CD4-positive, alpha-beta memory T cell (primary cell): ENCODE measurements at regions of chr7 and their contacts with region 1.

Region 1: DNA sequence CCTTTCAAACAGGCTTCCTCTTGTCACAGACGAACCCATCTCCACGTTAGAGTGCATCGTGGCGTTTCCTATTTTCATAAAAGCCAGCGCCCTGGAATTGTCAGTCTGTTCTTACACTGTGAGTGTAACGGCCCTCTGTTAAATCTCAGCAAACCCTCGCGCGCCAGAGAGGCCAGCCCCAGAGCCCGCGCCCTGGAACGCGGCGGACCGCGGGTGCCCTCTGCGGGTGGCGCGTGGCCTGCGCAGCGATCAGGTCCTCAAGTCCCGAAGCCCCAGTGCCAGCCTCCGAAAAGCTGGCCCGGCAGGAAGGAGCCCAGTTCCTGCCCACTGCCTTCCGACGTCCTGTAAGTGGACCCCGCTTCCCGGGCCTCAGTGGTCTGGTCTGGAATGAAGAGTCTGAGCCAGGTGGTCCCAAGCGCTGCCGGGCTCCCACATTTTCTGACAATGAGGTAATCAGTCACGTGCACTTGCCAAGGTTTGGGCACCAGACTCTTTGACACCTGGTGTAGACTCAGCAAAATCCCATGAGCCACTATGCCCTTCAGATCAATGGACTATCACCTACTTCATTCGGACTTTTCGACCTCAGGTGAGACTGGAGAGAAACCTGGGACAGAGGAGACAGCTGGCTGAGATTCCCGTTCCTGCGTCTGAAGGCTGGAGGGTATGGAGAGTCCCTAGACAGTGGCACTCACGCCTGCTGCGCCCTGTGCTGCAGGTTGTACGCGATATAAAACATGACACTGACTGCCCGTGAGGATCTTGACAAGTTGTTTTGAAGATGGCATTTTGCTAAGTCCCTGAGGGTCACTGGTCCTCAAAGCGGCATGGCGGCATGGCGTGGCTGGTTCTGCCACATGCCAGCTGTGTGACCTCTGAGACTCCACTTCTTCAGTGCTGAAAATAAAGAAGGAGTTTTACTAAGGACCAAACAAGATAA is 109.4 kb upstream of the LANCL2 start:
- DNase-seq: peak; percentile 54 to 67 (median 65)
- H3K4me3 ChIP-seq: peak overlapping the region; percentile 66 to 73
- H3K4me3 Mint-ChIP-seq: peak overlapping the region; percentile 81 to 94 (median 90)
- H3K27ac ChIP-seq: no peak overlapping the region
- H3K27ac Mint-ChIP-seq: peak overlapping the region in 5 of 7 donors; percentile 21 to 77 (median 63)
- H3K4me1 ChIP-seq: peaks cover 14% of the 10 kb centered on the region
- H3K4me1 Mint-ChIP-seq: peaks cover 5 to 18% (median 13%) of the 10 kb centered on the region in 4 donors
- H3K27me3 ChIP-seq: peaks cover 8% of the 10 kb centered on the region
- H3K27me3 Mint-ChIP-seq: peaks cover 26 to 50% of the 10 kb centered on the region in 2 donors

Region 2: GRCh38 chr7:54758702-54759592 is 496.8 kb before region 1 on chr7 and contains the start of gene SEC61G:
- CTCF ChIA-PET with region 1: interaction called, 12 read pairs
- POLR2A ChIA-PET with region 1: interaction called, 7 read pairs
- intact Hi-C with region 1: loop called (anchors 1 kb)
- DNase-seq: peak; percentile 95 to 96 (median 95)
- H3K4me3 ChIP-seq: peak within 1 kb of the TSS; percentile 62 to 97
- H3K4me3 Mint-ChIP-seq: peak within 1 kb of the TSS; percentile 99 to 100 (median 100)
- H3K27ac ChIP-seq: peak within 1 kb of the TSS; percentile 81
- H3K27ac Mint-ChIP-seq: peak within 1 kb of the TSS; percentile 95 to 99 (median 98)
- H3K4me1 ChIP-seq: peaks cover 22% of the 10 kb centered on the region
- H3K4me1 Mint-ChIP-seq: peaks cover 15 to 51% (median 32%) of the 10 kb centered on the region in 4 donors
- H3K27me3 ChIP-seq: no peaks in the 10 kb centered on the region
- H3K27me3 Mint-ChIP-seq: no peaks in the 10 kb centered on the region
- total RNA-seq, gene SEC61G: 67.0 to 73.9 TPM

Region 3: GRCh38 chr7:55245271-55245723 is 10.5 kb before region 1 on chr7:
- CTCF ChIA-PET with region 1: interaction called, 17 read pairs
- POLR2A ChIA-PET with region 1: no interaction called
- intact Hi-C with region 1: no loop called
- DNase-seq: no peak
- H3K4me3 ChIP-seq: no peak overlapping the region
- H3K4me3 Mint-ChIP-seq: no peak overlapping the region
- H3K27ac ChIP-seq: no peak overlapping the region
- H3K27ac Mint-ChIP-seq: no peak overlapping the region
- H3K4me1 ChIP-seq: no peaks in the 10 kb centered on the region
- H3K4me1 Mint-ChIP-seq: no peaks in the 10 kb centered on the region
- H3K27me3 ChIP-seq: no peaks in the 10 kb centered on the region
- H3K27me3 Mint-ChIP-seq: peaks cover 13 to 18% of the 10 kb centered on the region in 2 donors

Region 4: DNA sequence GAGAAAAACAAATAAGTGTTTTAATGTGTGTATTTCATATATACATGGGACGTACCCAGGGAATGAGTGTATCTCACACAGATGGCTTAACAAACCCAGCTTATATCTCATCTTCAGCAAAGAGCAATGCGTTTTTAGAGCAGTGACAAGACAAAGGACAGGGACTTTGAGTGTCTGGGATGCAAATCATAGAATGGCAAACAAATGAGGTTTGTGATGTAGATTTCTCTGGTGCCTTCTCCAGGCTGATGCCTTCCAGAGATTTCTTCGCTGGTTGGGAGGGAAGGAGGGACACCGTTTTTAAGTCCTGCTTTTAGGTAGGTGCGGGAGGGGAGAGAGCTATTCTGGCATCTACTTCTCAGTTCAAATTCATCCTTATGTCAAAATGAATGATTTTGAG is 125.9 kb after region 1 on chr7:
- CTCF ChIA-PET with region 1: no interaction called
- POLR2A ChIA-PET with region 1: no interaction called
- intact Hi-C with region 1: no loop called
- DNase-seq: no peak
- H3K4me3 ChIP-seq: no peak overlapping the region
- H3K4me3 Mint-ChIP-seq: no peak overlapping the region
- H3K27ac ChIP-seq: no peak overlapping the region
- H3K27ac Mint-ChIP-seq: peak overlapping the region in 1 of 7 donors; percentile 31
- H3K4me1 ChIP-seq: no peaks in the 10 kb centered on the region
- H3K4me1 Mint-ChIP-seq: peaks cover 0 to 3% (median under 1%) of the 10 kb centered on the region in 4 donors
- H3K27me3 ChIP-seq: no peaks in the 10 kb centered on the region
- H3K27me3 Mint-ChIP-seq: no peaks in the 10 kb centered on the region